Activated naive CD8-positive, alpha-beta T cell treated with anti-CD3 and anti-CD28 coated beads, Interleukin-2, amount 10 ng/mL, durations not matched to agents 7 days and 5 days (primary cell): ENCODE measurements at regions of chr6 and their contacts with region 1.

Region 1: DNA sequence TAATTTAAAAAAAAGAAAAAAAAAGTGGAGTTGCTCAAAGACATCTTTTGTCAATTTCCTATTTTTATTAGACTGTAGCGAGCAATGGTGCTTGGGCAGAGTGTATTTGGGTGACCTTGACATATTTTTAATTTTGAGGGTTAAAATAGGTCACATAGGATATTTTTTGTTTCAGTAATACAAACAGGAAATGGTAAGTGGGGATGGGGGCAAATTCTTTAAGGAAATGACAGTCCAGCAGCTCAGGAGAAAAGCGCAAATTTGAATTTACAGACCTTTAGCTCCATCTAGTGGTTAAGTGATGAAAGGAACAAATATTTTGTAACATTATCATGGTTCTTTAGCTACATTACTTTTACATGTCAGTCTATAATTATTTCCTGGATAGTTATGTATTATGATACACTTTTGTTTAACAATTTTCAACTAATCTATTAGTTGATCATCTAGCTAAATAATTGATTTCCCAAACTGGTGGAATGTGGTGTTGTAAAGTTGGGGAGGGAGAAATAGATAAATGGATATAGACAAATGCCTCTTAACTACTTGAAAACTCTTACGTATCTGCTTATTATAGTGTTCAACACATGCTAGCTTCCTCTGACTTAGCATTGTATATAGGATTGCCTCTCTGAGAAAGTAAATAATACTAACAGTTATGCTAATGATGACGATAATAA is 10.0 kb downstream of the CITED2 start:
- DNase-seq: no peak
- ATAC-seq: no peak
- H3K4me3 Mint-ChIP-seq: no peak overlapping the region
- H3K27ac Mint-ChIP-seq: no peak overlapping the region
- H3K4me1 Mint-ChIP-seq: peaks cover 34% of the 10 kb centered on the region
- H3K27me3 Mint-ChIP-seq: no peaks in the 10 kb centered on the region

Region 2: GRCh38 chr6:139219271-139219729 is 145.1 kb before region 1 on chr6:
- POLR2A ChIA-PET with region 1: interaction called, 10 read pairs
- DNase-seq: peak; percentile 62
- ATAC-seq: peak; percentile 99
- H3K4me3 Mint-ChIP-seq: no peak overlapping the region
- H3K27ac Mint-ChIP-seq: peak overlapping the region; percentile 87
- H3K4me1 Mint-ChIP-seq: peaks cover 13% of the 10 kb centered on the region
- H3K27me3 Mint-ChIP-seq: no peaks in the 10 kb centered on the region

Region 3: GRCh38 chr6:139392794-139393193 is 28.4 kb after region 1 on chr6:
- POLR2A ChIA-PET with region 1: no interaction called
- DNase-seq: no peak
- ATAC-seq: no peak
- H3K4me3 Mint-ChIP-seq: no peak overlapping the region
- H3K27ac Mint-ChIP-seq: no peak overlapping the region
- H3K4me1 Mint-ChIP-seq: no peaks in the 10 kb centered on the region
- H3K27me3 Mint-ChIP-seq: no peaks in the 10 kb centered on the region

Region 4: DNA sequence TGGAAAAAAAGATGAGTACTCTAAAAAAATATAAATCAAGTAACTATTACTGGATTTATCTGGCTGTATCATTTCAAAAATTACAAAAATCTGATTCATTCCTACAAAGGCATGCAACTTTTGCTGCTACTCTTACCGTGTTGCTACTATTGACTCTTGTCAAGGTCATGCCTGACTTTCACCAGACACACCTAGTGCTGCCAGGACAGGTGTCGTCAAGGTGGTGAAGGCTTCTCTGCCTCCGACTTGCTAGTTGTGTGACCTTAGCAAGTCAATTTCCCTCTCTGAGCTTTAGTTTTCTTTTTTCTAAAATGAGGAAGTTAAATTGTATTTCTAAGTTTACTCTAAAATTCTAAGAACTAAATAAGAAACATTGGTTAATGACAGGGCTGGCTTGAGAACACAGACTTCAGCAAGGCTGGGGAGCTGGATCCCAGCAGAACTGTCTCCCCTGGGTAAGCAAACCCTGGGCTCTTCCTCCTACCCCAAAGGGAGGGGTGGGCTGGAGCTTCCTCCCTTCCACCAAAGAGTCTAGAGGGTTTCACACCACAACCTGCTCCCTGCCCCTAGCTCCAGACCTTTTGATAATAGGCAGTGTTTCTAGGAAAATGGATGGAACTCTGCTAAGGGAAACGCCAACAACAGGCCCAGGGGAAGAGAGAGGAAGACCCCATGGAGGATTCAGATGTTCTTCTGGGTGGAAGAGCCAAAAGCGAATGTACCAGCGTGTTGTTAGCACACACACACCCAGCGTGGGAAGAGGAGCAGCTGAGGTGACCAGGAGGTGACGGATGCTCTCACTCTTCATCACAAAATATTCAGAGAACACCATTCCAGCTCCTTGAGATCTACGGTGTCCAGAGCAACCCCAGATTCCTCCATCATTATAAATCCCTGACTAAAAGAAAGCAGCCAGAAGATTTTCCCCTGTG is 57.9 kb after region 1 on chr6:
- POLR2A ChIA-PET with region 1: no interaction called
- DNase-seq: no peak
- ATAC-seq: no peak
- H3K4me3 Mint-ChIP-seq: no peak overlapping the region
- H3K27ac Mint-ChIP-seq: no peak overlapping the region
- H3K4me1 Mint-ChIP-seq: no peaks in the 10 kb centered on the region
- H3K27me3 Mint-ChIP-seq: peaks cover 20% of the 10 kb centered on the region

Region 5: GRCh38 chr6:139482287-139482686 is 117.8 kb after region 1 on chr6:
- POLR2A ChIA-PET with region 1: no interaction called
- DNase-seq: no peak
- ATAC-seq: no peak
- H3K4me3 Mint-ChIP-seq: no peak overlapping the region
- H3K27ac Mint-ChIP-seq: no peak overlapping the region
- H3K4me1 Mint-ChIP-seq: no peaks in the 10 kb centered on the region
- H3K27me3 Mint-ChIP-seq: peaks cover 10% of the 10 kb centered on the region